Activated CD4-positive, alpha-beta T cell treated with anti-CD3 and anti-CD28 coated beads for 36 hours (primary cell): ENCODE measurements at regions of chr2 and their contacts with region 1.

Region 1: GRCh38 chr2:105671156-105671555 is 73.6 kb upstream of the NCK2 start:
- DNase-seq: no peak
- ATAC-seq: no peak
- H3K4me3 Mint-ChIP-seq: no peak overlapping the region
- H3K27ac Mint-ChIP-seq: no peak overlapping the region
- H3K4me1 Mint-ChIP-seq: peaks cover 19% of the 10 kb centered on the region
- H3K27me3 Mint-ChIP-seq: no peaks in the 10 kb centered on the region

Region 2: DNA sequence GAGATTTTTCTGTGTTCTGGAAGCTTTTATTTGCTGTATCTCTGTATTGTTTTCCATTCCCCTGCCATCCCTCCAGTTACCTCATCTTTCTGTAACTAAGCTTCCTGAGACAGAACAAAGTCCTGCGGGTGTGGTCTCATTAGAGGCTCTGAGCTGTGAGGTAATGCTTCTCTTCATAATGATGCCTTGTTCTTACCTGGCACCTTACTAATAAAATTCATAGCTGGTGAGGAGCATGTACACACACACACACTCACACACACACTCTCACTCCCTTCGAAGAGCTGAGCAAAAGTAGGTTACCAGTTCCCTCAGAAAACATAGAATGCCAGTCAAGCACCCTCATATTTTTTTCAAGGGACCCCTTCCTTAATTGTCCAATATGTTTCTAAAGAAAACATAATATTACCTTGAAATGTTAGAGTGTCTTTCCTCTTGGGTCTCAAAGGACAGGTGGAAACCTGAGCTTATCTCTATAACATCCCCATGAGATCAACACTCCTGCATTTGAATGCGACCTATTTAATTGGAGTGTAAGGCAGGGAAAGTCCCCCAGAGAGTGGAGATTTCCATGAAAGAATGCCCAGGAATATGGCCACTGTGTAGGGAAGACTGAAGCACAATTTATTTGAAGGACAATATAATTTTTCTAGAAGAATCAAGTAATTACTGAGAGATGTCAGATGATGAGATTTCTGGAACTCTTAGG is 88.0 kb before region 1 on chr2:
- CTCF ChIA-PET with region 1: no interaction called
- POLR2A ChIA-PET with region 1: no interaction called
- intact Hi-C with region 1: loop called in 1 of 2 experiments (anchors 10 kb)
- DNase-seq: no peak
- ATAC-seq: no peak
- H3K4me3 Mint-ChIP-seq: no peak overlapping the region
- H3K27ac Mint-ChIP-seq: no peak overlapping the region
- H3K4me1 Mint-ChIP-seq: peaks cover 36% of the 10 kb centered on the region
- H3K27me3 Mint-ChIP-seq: no peaks in the 10 kb centered on the region

Region 3: GRCh38 chr2:105652014-105652796 is 19.0 kb before region 1 on chr2:
- CTCF ChIA-PET with region 1: no interaction called
- POLR2A ChIA-PET with region 1: no interaction called
- intact Hi-C with region 1: no loop called
- DNase-seq: no peak
- ATAC-seq: no peak
- H3K4me3 Mint-ChIP-seq: no peak overlapping the region
- H3K27ac Mint-ChIP-seq: no peak overlapping the region
- H3K4me1 Mint-ChIP-seq: peaks cover 11% of the 10 kb centered on the region
- H3K27me3 Mint-ChIP-seq: no peaks in the 10 kb centered on the region

Region 4: DNA sequence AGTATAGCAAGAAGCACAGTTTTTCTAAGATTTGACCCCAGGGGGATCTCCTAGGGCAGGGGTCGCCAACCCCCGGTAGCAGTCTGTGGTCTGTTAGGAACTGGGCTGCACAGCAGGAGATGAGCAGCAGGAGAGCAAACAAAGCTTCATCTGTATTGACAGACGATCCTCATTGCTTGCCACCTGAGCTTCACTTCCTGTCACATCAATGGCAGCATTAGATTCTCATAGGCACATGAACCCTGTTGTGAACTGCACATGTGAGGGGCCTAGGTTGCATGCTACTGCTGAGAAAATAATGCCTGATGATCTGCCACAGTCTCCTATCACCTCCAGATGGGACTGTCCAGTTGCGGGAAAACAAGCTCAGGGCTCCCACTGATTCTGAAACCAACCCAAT is 660.9 kb after region 1 on chr2:
- CTCF ChIA-PET with region 1: no interaction called
- POLR2A ChIA-PET with region 1: no interaction called
- intact Hi-C with region 1: no loop called
- DNase-seq: no peak
- ATAC-seq: no peak
- H3K4me3 Mint-ChIP-seq: no peak overlapping the region
- H3K27ac Mint-ChIP-seq: no peak overlapping the region
- H3K4me1 Mint-ChIP-seq: peaks cover 6% of the 10 kb centered on the region
- H3K27me3 Mint-ChIP-seq: no peaks in the 10 kb centered on the region